ENCODE measurements at regions of chr2 and their contacts with region 1.

Region 1: GRCh38 chr2:45729753-45730512 is 78.5 kb downstream of the PRKCE start:
- DNase-seq: no peak
- ATAC-seq: no peak
- H3K4me3 ChIP-seq: no peak overlapping the region
- H3K27ac ChIP-seq: no peak overlapping the region
- H3K4me1 ChIP-seq: peaks cover 1% of the 10 kb centered on the region
- H3K27me3 ChIP-seq: no peaks in the 10 kb centered on the region

Region 2: GRCh38 chr2:45659176-45659575 is 70.8 kb before region 1 on chr2:
- intact Hi-C with region 1: no loop called
- DNase-seq: no peak
- ATAC-seq: no peak
- H3K4me3 ChIP-seq: no peak overlapping the region
- H3K27ac ChIP-seq: no peak overlapping the region
- H3K4me1 ChIP-seq: peaks cover 2% of the 10 kb centered on the region
- H3K27me3 ChIP-seq: no peaks in the 10 kb centered on the region

Region 3: DNA sequence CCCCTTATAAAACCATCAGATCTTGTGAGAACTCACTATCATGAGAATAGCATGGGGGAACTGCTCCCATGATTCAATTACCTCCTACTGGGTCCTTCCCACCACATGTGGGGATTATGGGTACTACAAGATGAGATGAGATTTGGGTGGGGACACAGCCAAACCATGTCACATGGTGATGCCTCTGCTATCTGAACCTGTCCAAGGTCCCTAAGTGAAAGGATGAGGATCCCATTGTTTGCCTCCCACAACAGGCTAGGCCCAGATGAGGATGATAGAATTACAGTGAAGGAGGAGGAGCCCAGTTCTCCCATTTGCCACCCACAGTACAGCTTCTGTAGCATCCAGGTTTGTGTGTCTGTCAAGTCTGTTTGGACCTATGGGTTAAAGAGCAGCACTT is 13.0 kb before region 1 on chr2:
- intact Hi-C with region 1: loop called in 1 of 4 experiments (anchors 2 kb)
- DNase-seq: no peak
- ATAC-seq: no peak
- H3K4me3 ChIP-seq: no peak overlapping the region
- H3K27ac ChIP-seq: no peak overlapping the region
- H3K4me1 ChIP-seq: peaks cover 18% of the 10 kb centered on the region
- H3K27me3 ChIP-seq: no peaks in the 10 kb centered on the region

Measured in right cardiac atrium (tissue), 5 donors.